ENCODE measurements at regions of chr18 and their contacts with region 1.

Region 1: GRCh38 chr18:74551936-74552555 is 17.7 kb downstream of the CNDP1 start:
- DNase-seq: peak; percentile 86
- H3K4me3 Mint-ChIP-seq: no peak overlapping the region
- H3K27ac Mint-ChIP-seq: peak overlapping the region; percentile 51
- H3K4me1 Mint-ChIP-seq: no peaks in the 10 kb centered on the region
- H3K27me3 Mint-ChIP-seq: peaks cover 13% of the 10 kb centered on the region

Region 2: DNA sequence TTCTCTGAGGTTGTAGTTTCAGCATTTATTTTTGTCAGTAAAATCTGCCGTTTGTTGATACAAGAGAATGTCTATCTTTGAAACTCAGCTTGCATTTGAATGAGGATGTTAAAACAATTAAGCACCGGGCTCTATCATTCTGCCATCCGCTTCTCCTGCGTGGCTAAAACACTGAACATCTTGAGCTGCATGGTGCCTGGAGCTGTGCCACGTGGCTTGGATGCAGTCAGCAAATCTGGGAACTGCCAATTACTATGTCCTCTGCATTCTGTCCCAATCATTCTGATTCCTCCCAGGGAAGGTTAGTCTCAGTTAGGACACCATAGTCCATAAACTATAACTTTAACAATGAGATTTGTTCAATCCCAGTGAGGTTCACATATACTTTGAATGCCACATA is 1002.8 kb before region 1 on chr18:
- CTCF ChIA-PET with region 1: no interaction called
- POLR2A ChIA-PET with region 1: no interaction called
- intact Hi-C with region 1: no loop called
- DNase-seq: no peak
- H3K4me3 Mint-ChIP-seq: no peak overlapping the region
- H3K27ac Mint-ChIP-seq: no peak overlapping the region
- H3K4me1 Mint-ChIP-seq: no peaks in the 10 kb centered on the region
- H3K27me3 Mint-ChIP-seq: no peaks in the 10 kb centered on the region

Region 3: DNA sequence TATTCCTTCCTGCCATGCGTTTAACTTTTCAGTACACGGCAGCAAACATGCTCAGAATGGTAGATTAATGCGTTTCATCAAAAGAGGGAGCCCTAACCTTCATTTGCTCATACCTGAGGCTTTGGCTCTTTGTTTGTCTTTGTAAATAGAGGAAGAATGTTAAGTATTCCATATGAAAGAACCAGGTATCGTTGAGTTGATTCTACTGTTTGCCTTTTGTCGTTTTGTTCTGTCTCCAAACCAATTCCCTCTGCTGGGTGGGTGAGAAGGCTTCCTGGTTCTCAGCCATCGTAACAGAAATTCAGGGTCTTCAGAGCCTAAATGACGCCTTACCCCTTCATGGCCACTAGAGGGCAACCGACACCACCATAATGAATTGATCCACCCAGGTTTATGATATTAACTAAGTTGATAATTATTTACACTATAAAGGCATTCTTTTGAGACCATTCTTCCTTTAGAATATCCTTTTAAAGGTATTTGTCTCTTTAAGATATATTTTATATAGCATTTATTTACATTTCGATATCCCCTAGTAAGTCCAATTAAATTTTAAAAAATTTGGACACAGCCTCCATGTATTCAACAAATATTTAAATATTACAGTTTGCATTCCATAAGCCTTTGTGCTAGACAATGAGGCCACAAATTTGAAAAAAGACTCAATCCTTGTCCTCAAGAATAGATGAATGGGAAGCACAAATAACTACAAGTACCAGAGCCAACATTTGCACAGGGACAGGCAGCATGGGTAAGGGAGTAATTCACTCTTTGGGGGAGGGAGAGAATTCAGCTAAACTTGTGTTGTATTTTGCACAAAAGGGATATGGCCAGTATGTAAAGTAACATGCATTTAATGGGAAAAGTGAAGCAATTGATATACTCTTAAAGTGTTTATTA is 355.6 kb before region 1 on chr18:
- CTCF ChIA-PET with region 1: interaction called, 17 read pairs
- POLR2A ChIA-PET with region 1: no interaction called
- intact Hi-C with region 1: loop called (anchors 1 kb)
- DNase-seq: peak; percentile 59
- H3K4me3 Mint-ChIP-seq: peak overlapping the region; percentile 69
- H3K27ac Mint-ChIP-seq: peak overlapping the region; percentile 56
- H3K4me1 Mint-ChIP-seq: peaks cover 6% of the 10 kb centered on the region
- H3K27me3 Mint-ChIP-seq: peaks cover under 1% of the 10 kb centered on the region

Region 4: DNA sequence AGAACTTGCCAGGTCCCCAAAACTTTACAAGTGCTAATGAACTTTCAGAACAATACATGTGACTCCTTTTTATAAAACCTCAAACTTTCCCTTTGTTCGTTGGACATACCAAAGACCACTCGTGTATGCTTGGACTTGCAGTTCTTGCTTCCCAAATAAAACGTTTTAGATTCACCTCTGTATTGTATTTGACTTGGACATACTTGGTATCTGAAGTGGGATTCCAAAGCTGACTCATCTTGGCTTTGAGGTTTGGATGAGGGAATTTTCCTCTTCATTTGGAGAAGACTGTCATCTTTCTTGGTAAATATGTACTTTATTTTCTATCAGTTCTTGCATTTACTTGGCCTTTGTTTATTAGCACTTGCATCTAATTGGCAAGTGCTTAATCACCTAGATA is 252.3 kb before region 1 on chr18:
- CTCF ChIA-PET with region 1: no interaction called
- POLR2A ChIA-PET with region 1: no interaction called
- intact Hi-C with region 1: no loop called
- DNase-seq: no peak
- H3K4me3 Mint-ChIP-seq: no peak overlapping the region
- H3K27ac Mint-ChIP-seq: no peak overlapping the region
- H3K4me1 Mint-ChIP-seq: no peaks in the 10 kb centered on the region
- H3K27me3 Mint-ChIP-seq: no peaks in the 10 kb centered on the region

Region 5: GRCh38 chr18:74353169-74353775 is 198.8 kb before region 1 on chr18:
- CTCF ChIA-PET with region 1: interaction called, 36 read pairs
- POLR2A ChIA-PET with region 1: no interaction called
- intact Hi-C with region 1: loop called (anchors 1 kb)
- DNase-seq: peak; percentile 58
- H3K4me3 Mint-ChIP-seq: no peak overlapping the region
- H3K27ac Mint-ChIP-seq: no peak overlapping the region
- H3K4me1 Mint-ChIP-seq: peaks cover 6% of the 10 kb centered on the region
- H3K27me3 Mint-ChIP-seq: peaks cover 1% of the 10 kb centered on the region

Region 6: DNA sequence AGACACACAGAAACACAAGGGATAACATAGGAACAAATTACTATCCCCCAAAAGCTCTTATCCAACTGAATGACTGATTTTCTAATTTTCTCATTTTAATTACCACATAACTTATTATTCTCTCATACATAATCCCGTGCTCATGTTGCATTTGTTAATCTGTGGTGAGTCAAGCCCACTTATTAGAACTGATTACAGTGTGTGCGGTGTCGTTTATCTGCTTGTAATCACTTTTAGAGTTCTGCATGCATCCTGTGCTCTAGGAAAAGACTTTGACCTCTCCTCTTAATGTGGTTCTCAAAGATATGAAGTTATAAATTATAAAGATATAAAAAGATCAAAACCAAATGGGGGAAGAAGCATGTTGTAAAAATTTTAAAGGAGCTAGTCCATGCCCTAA is 12.0 kb after region 1 on chr18:
- CTCF ChIA-PET with region 1: interaction called, 11 read pairs
- POLR2A ChIA-PET with region 1: no interaction called
- intact Hi-C with region 1: no loop called
- DNase-seq: no peak
- H3K4me3 Mint-ChIP-seq: no peak overlapping the region
- H3K27ac Mint-ChIP-seq: no peak overlapping the region
- H3K4me1 Mint-ChIP-seq: no peaks in the 10 kb centered on the region
- H3K27me3 Mint-ChIP-seq: peaks cover 12% of the 10 kb centered on the region